ENCODE measurements at regions of chr13 and their contacts with region 1.

Region 1: GRCh38 chr13:37888916-37889501 is 19.4 kb upstream of the TRPC4 start:
- DNase-seq: no peak
- ATAC-seq: no peak
- H3K4me3 ChIP-seq: no peak overlapping the region
- H3K27ac ChIP-seq: no peak overlapping the region
- H3K4me1 ChIP-seq: no peaks in the 10 kb centered on the region
- H3K27me3 ChIP-seq: no peaks in the 10 kb centered on the region
- CTCF ChIP-seq: no peak
- POLR2A ChIP-seq: no peak

Region 2: DNA sequence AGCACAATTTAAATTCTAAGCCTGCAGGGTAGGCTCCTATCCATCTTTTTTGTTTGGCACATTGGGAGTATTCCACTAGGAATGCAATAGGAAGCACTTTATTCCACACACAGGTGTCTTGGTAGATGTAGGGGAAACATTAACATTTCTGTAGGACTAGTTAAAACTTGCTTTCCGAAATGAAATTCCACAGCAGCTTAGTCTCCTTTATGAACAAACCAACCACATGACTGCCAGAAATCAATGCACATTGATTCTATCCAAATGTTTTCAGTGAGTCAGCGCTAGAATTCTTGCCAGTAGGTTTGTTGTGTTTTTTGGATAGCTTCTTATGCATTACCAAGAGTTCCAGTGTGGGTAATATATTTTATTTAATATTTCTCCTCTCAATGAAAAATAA is 575.6 kb before region 1 on chr13:
- intact Hi-C with region 1: no loop called
- DNase-seq: no peak
- ATAC-seq: peak in 1 of 4 donors; percentile 20
- H3K4me3 ChIP-seq: no peak overlapping the region
- H3K27ac ChIP-seq: no peak overlapping the region
- H3K4me1 ChIP-seq: no peaks in the 10 kb centered on the region
- H3K27me3 ChIP-seq: no peaks in the 10 kb centered on the region
- CTCF ChIP-seq: no peak
- POLR2A ChIP-seq: no peak

Region 3: GRCh38 chr13:38042771-38043170 is 153.8 kb after region 1 on chr13:
- intact Hi-C with region 1: loop called in 1 of 10 experiments (anchors 10 kb)
- DNase-seq: no peak
- ATAC-seq: no peak
- H3K4me3 ChIP-seq: no peak overlapping the region
- H3K27ac ChIP-seq: no peak overlapping the region
- H3K4me1 ChIP-seq: no peaks in the 10 kb centered on the region
- H3K27me3 ChIP-seq: no peaks in the 10 kb centered on the region
- CTCF ChIP-seq: no peak
- POLR2A ChIP-seq: no peak

Measured in heart left ventricle (tissue), 16 donors.